Endothelial cell of umbilical vein (primary cell): ENCODE measurements at regions of chr11 and their contacts with region 1.

Region 1: DNA sequence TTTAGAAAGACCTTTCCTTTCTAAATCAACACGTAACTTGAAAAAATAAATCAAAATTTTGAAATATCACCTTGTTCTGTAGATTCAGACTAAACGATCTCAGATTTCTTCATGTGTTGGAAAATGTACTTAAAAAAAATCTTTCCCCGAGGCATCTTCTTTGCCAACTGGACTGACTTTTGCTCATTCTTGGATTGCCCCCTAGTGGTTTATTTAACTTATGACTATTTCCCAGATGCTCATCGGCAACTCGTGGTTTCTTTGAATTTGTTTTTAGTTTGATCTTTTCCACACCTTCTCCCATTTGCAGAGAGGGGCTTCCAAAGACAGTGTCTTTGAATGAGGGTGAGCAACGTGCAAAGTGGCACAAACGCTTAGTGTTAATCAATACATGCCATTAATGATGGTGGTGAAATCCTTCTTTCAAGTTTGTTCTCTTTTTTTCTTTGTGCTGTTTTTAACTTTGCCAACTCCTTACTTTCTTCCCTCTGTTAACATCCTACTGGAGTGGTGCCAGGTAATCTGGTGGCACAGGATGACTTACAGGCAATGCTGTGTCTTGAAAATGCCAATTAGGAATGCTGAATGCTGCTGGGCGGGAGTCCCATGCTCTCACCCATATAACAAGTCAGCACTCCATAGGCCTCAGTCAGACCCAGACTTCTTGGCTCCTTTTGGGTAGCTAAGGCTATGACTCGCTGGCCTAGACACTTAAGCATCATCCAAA is 18.3 kb downstream of the PRSS23 start:
- DNase-seq: peak; percentile 84
- H3K4me3 ChIP-seq: no peak overlapping the region
- H3K27ac ChIP-seq: peak overlapping the region; percentile 77
- H3K4me1 ChIP-seq: peaks cover 53% of the 10 kb centered on the region
- H3K27me3 ChIP-seq: no peaks in the 10 kb centered on the region
- CTCF ChIP-seq: peak; percentile 41 to 45
- POLR2A ChIP-seq: no peak

Region 2: GRCh38 chr11:86523738-86524619 is 294.6 kb before region 1 on chr11:
- CTCF ChIA-PET with region 1: interaction called, 3 read pairs
- POLR2A ChIA-PET with region 1: no interaction called
- dilution Hi-C with region 1: no loop called
- intact Hi-C with region 1: loop called (anchors 1 kb)
- DNase-seq: peak; percentile 99
- H3K4me3 ChIP-seq: peak overlapping the region in 1 of 3 experiments; percentile 14
- H3K27ac ChIP-seq: peak overlapping the region; percentile 93
- H3K4me1 ChIP-seq: peaks cover 46% of the 10 kb centered on the region
- H3K27me3 ChIP-seq: no peaks in the 10 kb centered on the region
- CTCF ChIP-seq: no peak
- POLR2A ChIP-seq: peak; percentile 54

Region 3: DNA sequence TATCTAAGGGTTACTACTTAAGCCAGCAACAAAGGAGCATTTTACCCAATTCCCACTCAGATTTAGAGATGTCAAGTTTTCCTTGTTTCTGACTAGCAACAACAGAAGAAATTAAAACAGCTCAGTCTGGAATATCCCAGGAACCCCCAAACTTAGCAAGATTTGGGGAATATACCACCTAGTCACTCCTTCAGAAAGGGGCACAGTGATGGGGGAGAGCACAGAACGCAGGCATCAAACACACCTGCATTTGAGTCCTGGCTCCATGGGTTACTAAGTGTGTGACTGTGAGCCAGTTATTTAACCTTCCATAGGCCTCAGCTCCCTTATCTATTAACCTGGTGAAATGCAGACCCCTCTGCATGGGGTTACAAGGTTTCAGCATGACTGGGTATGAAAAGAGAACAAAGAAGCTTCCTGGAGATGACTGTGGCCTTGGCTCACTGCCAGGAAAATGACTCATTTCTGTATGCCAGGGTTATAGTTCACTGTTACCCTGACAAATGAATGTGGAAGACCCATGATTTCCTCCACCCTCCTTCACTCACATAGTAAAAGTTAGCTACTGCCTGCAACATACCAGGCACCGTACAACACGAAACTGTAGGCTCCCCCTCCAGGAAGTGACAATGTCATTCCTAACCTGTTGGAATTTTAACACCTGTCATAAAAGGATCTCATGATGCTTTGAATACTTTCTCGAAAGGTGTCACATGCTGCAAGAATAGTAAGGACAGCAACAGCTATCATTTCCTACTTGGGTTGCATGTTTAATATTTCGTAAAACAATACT is 225.8 kb before region 1 on chr11:
- CTCF ChIA-PET with region 1: no interaction called
- POLR2A ChIA-PET with region 1: no interaction called
- dilution Hi-C with region 1: no loop called
- intact Hi-C with region 1: loop called (anchors 5 kb)
- DNase-seq: peak; percentile 99
- H3K4me3 ChIP-seq: no peak overlapping the region
- H3K27ac ChIP-seq: peak overlapping the region; percentile 99
- H3K4me1 ChIP-seq: peaks cover 60% of the 10 kb centered on the region
- H3K27me3 ChIP-seq: no peaks in the 10 kb centered on the region
- CTCF ChIP-seq: no peak
- POLR2A ChIP-seq: peak; percentile 12

Region 4: GRCh38 chr11:86671682-86672621 is 146.7 kb before region 1 on chr11 and contains the start of gene ME3:
- CTCF ChIA-PET with region 1: interaction called, 3 read pairs
- POLR2A ChIA-PET with region 1: no interaction called
- dilution Hi-C with region 1: no loop called
- intact Hi-C with region 1: loop called (anchors 1 kb)
- DNase-seq: peak; percentile 80
- H3K4me3 ChIP-seq: peak within 1 kb of the TSS; percentile 60 to 88 (median 85)
- H3K27ac ChIP-seq: peak within 1 kb of the TSS; percentile 91
- H3K4me1 ChIP-seq: peaks cover 31% of the 10 kb centered on the region
- H3K27me3 ChIP-seq: no peaks in the 10 kb centered on the region
- CTCF ChIP-seq: no peak
- POLR2A ChIP-seq: peak; percentile 80
- total RNA-seq, gene ME3: 26.9 and 27.2 TPM in 2 replicates

Region 5: DNA sequence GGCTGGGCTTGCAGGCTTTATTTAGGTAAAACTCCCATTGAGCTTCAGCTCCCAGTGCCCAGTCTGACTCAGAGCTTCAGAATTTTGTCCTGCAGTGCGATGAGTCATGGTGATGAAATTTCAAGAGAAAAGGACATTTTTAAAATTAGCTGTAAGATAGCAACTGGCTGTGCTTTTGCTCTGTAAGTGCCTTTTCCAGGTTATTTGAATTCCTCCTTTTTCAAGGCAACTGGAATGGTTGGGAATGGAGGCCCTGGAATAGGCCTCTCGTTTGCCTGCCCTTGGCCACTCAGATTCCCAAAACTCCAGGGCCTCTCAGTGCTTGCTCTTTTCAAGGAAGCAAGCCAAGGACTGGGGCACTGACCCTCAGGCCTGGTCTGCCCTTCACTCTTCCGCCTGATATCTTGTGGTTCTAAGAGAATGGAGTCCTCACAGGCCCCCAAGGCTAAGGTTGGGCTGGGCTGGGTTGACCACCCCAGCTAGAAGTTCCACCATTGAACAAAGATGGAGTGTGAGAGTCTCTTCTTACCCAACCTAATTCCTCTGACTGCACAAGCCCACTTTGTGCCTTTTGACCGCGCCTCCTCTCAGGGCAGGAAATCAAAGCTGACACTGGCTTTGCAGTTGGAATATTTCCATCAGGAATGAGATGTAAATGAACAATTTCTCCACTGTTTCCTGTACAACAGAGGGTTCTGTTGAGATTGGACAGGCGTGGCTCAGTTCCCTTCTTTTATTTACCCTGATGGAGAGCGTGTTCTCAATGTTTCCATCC is 77.7 kb before region 1 on chr11:
- CTCF ChIA-PET with region 1: no interaction called
- POLR2A ChIA-PET with region 1: no interaction called
- dilution Hi-C with region 1: no loop called
- intact Hi-C with region 1: loop called (anchors 1 kb)
- DNase-seq: peak; percentile 94
- H3K4me3 ChIP-seq: peak overlapping the region in 1 of 3 experiments; percentile 7
- H3K27ac ChIP-seq: peak overlapping the region; percentile 99
- H3K4me1 ChIP-seq: peaks cover 78% of the 10 kb centered on the region
- H3K27me3 ChIP-seq: no peaks in the 10 kb centered on the region
- CTCF ChIP-seq: no peak
- POLR2A ChIP-seq: no peak

Region 6: DNA sequence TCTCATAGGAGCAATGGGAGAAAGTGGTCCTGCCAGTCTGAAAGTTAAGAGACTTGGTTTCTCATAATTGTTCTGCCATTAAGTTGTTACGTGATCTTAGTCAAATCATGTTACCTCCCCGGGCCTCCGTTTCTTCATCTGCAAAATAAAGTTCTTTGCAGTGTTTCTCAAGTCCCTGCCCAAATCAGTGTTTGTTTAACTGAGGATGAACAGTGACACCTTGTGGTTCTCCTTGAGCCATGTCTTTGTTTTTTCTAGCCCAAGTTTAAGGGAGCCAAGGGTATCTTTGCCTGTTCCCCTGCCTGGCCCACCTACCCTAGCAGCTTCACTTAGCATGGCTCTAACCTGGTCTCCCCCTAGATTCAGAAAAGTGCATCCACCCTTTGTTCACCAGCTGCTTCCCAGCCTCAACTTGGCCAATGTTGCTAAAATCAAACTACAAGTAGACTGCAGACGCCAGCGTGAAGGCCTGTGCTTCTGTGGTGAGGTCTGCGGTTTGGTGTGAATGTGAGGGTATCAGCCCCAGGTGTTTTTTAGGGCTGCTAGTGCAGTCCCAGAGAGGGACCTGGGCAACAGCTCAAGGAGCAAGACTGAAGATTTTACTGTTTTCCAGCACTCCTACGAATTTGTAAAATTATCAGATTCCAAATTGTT is 101.1 kb after region 1 on chr11:
- CTCF ChIA-PET with region 1: interaction called, 5 read pairs
- POLR2A ChIA-PET with region 1: no interaction called
- dilution Hi-C with region 1: no loop called
- intact Hi-C with region 1: loop called (anchors 1 kb)
- DNase-seq: peak; percentile 88
- H3K4me3 ChIP-seq: no peak overlapping the region
- H3K27ac ChIP-seq: peak overlapping the region; percentile 100
- H3K4me1 ChIP-seq: peaks cover 48% of the 10 kb centered on the region
- H3K27me3 ChIP-seq: no peaks in the 10 kb centered on the region
- CTCF ChIP-seq: peak; percentile 60
- POLR2A ChIP-seq: no peak

Region 7: DNA sequence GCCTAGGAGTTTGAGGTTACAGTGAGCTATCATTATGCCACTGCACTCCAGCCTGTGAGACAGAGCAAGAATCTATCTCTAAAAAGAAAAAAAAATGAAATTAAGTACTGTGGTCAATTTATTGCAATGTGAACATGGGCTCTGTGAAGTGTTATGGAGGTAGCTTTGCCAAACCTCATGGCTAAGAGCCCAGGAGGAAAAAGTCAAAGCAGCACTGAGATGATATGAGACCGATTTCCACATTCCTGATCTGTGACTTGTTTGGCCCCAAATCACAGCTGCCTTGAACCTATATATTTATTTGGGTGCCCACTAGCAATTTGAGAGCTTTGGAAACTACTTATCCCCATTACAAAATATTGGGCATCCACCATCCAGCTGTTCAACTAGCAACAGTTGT is 189.3 kb after region 1 on chr11:
- CTCF ChIA-PET with region 1: no interaction called
- POLR2A ChIA-PET with region 1: no interaction called
- dilution Hi-C with region 1: no loop called
- intact Hi-C with region 1: no loop called
- DNase-seq: no peak
- H3K4me3 ChIP-seq: no peak overlapping the region
- H3K27ac ChIP-seq: no peak overlapping the region
- H3K4me1 ChIP-seq: no peaks in the 10 kb centered on the region
- H3K27me3 ChIP-seq: no peaks in the 10 kb centered on the region
- CTCF ChIP-seq: no peak
- POLR2A ChIP-seq: no peak